Activated CD8-positive, alpha-beta T cell treated with anti-CD3 and anti-CD28 coated beads for 36 hours (primary cell): ENCODE measurements at regions of chr12 and their contacts with region 1.

Region 1: GRCh38 chr12:55073043-55074022 is 52.9 kb upstream of the OR9K2 start:
- DNase-seq: peak; percentile 88
- ATAC-seq: peak; percentile 71
- H3K4me3 Mint-ChIP-seq: no peak overlapping the region
- H3K27ac Mint-ChIP-seq: no peak overlapping the region
- H3K4me1 Mint-ChIP-seq: peaks cover 4% of the 10 kb centered on the region
- H3K27me3 Mint-ChIP-seq: peaks cover 20% of the 10 kb centered on the region
- CTCF ChIP-seq: peak; percentile 85

Region 2: GRCh38 chr12:54587315-54587873 is 485.9 kb before region 1 on chr12:
- CTCF ChIA-PET with region 1: no interaction called
- POLR2A ChIA-PET with region 1: no interaction called
- intact Hi-C with region 1: no loop called
- DNase-seq: no peak
- ATAC-seq: no peak
- H3K4me3 Mint-ChIP-seq: no peak overlapping the region
- H3K27ac Mint-ChIP-seq: no peak overlapping the region
- H3K4me1 Mint-ChIP-seq: peaks cover 5% of the 10 kb centered on the region
- H3K27me3 Mint-ChIP-seq: peaks cover 56% of the 10 kb centered on the region
- CTCF ChIP-seq: no peak

Region 3: GRCh38 chr12:54603173-54603814 is 470.0 kb before region 1 on chr12:
- CTCF ChIA-PET with region 1: interaction called, 11 read pairs
- POLR2A ChIA-PET with region 1: no interaction called
- intact Hi-C with region 1: no loop called
- DNase-seq: peak; percentile 85
- ATAC-seq: peak; percentile 95
- H3K4me3 Mint-ChIP-seq: no peak overlapping the region
- H3K27ac Mint-ChIP-seq: no peak overlapping the region
- H3K4me1 Mint-ChIP-seq: peaks cover 5% of the 10 kb centered on the region
- H3K27me3 Mint-ChIP-seq: peaks cover 2% of the 10 kb centered on the region
- CTCF ChIP-seq: peak; percentile 80

Region 4: GRCh38 chr12:54749191-54749818 is 324.0 kb before region 1 on chr12:
- CTCF ChIA-PET with region 1: interaction called, 196 read pairs
- POLR2A ChIA-PET with region 1: no interaction called
- intact Hi-C with region 1: loop called (anchors 2 kb)
- DNase-seq: peak; percentile 44
- ATAC-seq: peak; percentile 86
- H3K4me3 Mint-ChIP-seq: peak overlapping the region; percentile 30
- H3K27ac Mint-ChIP-seq: no peak overlapping the region
- H3K4me1 Mint-ChIP-seq: peaks cover 19% of the 10 kb centered on the region
- H3K27me3 Mint-ChIP-seq: no peaks in the 10 kb centered on the region
- CTCF ChIP-seq: peak; percentile 72

Region 5: GRCh38 chr12:54935235-54935951 is 137.9 kb before region 1 on chr12:
- CTCF ChIA-PET with region 1: interaction called, 12 read pairs
- POLR2A ChIA-PET with region 1: no interaction called
- intact Hi-C with region 1: no loop called
- DNase-seq: peak; percentile 71
- ATAC-seq: peak; percentile 85
- H3K4me3 Mint-ChIP-seq: peak overlapping the region; percentile 26
- H3K27ac Mint-ChIP-seq: peak overlapping the region; percentile 99
- H3K4me1 Mint-ChIP-seq: peaks cover 61% of the 10 kb centered on the region
- H3K27me3 Mint-ChIP-seq: no peaks in the 10 kb centered on the region
- CTCF ChIP-seq: no peak

Region 6: DNA sequence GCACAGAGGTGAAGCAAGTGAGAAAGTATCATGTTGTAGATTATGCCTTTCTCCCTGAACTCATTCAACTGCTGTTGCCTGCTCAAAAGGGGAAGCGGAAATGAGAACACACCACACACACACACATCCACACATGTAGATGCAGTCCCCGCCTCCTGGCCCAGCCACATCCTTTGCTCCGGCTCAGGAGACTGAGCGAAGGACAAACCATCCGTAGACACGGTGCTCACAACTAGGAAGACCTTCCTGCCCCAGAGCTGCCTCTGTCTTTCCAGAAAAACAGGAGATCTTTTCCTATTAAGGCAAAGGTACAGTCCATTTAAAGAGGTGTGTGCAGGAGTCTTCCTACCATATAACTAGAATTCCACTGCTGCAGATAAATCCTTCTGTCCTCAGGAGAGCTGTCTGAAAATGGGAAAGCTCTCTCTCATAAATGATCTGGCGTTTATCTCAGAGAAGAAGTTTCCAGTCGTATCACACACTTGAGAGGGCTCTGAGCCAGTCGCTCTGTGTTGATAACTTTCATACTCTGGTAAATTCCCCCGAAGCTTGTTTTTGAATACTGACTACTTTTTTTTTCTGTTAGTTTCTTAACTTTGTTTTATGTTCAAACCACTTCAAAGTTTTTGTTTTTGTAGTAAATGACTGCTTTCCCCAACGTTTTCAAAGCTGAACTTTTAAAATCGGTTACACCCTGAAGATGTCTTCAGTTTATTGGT is 88.5 kb before region 1 on chr12 and contains the start of gene TESPA1:
- CTCF ChIA-PET with region 1: interaction called, 51 read pairs
- POLR2A ChIA-PET with region 1: no interaction called
- intact Hi-C with region 1: no loop called
- DNase-seq: peak; percentile 94
- ATAC-seq: peak; percentile 88
- H3K4me3 Mint-ChIP-seq: peak within 1 kb of the TSS; percentile 85
- H3K27ac Mint-ChIP-seq: peak within 1 kb of the TSS; percentile 94
- H3K4me1 Mint-ChIP-seq: peaks cover 53% of the 10 kb centered on the region
- H3K27me3 Mint-ChIP-seq: no peaks in the 10 kb centered on the region
- CTCF ChIP-seq: no peak
- total RNA-seq, gene TESPA1: 107 to 112 TPM

Region 7: GRCh38 chr12:55043542-55043941 is 29.8 kb before region 1 on chr12:
- CTCF ChIA-PET with region 1: interaction called, 18 read pairs
- POLR2A ChIA-PET with region 1: no interaction called
- intact Hi-C with region 1: no loop called
- DNase-seq: peak; percentile 10
- ATAC-seq: no peak
- H3K4me3 Mint-ChIP-seq: no peak overlapping the region
- H3K27ac Mint-ChIP-seq: no peak overlapping the region
- H3K4me1 Mint-ChIP-seq: peaks cover 7% of the 10 kb centered on the region
- H3K27me3 Mint-ChIP-seq: no peaks in the 10 kb centered on the region
- CTCF ChIP-seq: no peak